Left ventricle myocardium superior (tissue), 1 donor: ENCODE measurements at regions of chr9 and their contacts with region 1.

Region 1: GRCh38 chr9:93984860-93985259 is 29.7 kb upstream of the BARX1 start:
- DNase-seq: no peak
- ATAC-seq: no peak

Region 2: DNA sequence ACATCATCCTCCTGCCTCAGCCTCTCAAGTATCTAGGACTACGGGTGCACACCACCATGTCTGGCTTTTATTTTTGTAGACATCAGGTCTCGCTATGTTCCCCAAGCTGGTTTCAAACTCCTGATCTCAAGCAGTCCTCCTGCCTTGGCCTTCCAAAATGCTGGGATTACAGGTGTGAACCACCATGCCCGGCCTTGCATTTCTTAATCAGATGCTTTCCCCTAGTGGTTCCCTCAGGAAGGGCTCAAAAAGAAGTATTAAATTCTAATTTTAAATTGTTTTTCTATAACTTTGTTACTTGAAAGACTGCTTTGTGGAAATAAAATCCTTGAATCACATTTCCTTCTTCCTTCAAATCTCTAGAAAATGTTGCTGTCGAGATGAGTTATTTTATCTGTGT is 1955.3 kb before region 1 on chr9:
- intact Hi-C with region 1: loop called (anchors 10 kb)
- DNase-seq: no peak
- ATAC-seq: no peak

Region 3: GRCh38 chr9:93908591-93909511 is 76.0 kb before region 1 on chr9:
- intact Hi-C with region 1: no loop called
- DNase-seq: no peak
- ATAC-seq: no peak

Region 4: DNA sequence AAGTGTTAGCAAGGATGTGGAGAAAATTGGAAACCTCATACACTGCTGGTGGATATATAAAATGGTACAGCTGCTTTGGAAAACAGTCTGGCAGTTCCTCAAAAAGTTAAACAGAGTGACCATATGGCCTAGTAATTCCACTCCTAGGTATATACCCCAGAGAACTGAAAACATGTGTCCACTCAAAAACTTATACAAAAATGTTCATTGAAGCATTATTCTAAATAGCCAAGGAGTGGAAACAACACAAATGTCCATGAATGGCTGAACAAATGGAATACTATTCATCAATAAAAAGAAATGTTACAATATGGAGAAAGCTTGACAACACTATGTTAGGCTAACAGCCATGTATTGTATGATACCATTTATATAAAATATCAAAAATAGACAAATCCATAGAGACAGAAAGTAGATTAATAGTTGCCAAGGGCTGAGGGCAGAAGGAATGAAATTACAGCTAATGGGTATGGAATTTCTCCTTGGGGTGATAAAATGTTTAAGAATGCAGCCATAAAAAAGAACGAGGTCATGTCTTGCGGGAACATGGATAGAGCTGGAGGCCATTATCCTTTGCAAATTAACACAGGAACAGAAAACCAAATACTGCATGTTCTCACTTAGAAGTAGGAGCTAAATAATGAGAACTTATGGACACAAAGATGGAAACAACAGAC is 688.1 kb after region 1 on chr9:
- intact Hi-C with region 1: no loop called
- DNase-seq: no peak
- ATAC-seq: no peak